ENCODE measurements at regions of chr16 and their contacts with region 1.

Region 1: DNA sequence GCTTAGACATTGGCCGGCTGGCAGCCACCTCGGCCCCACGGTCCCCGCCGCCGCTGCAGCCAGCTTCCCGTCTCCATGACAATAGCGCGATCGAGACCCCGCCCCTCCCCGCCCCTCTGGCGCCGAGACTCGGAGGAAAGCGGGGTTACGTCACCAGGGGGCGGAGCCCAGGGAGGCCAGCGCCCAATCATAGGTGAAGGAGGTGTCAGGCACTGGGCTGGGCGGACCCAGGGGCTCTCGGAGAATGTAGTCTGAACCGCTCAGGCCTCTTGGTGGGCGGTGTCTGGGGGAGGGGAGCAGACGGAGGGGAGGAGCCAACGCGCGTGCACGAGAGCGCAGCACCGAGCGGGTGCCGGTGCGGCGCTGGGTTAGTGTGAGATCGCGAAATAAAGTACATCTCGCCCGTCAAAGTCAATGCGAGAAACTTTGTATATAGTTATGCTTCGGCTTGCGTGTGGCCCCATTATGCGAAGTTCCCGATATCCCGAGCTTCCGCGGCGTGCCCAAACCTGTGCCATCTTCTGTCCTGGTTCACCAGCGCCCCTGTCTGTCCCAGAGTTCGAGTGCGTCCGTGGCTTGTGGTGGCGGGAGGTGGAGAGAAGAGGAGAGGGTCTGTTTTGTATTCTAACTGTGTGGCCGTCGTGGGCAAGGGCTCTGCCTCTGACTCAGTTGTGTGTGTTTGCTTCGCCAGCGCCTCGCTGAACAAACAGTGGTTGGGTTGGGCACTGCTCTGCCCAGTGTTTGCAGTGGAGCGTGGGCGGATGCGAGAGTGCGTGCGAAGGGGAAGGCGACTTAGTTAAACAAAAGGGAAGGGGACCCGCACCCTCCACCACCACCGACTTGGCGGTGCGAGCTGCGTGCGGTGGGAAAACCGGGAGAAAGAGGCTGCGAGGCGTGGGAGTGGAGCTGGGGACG is 1.3 kb upstream of the IRX5 start:
- DNase-seq: peak; percentile 82 to 96 (median 88)
- ATAC-seq: peak; percentile 97
- H3K4me3 ChIP-seq: peak overlapping the region; percentile 70
- H3K4me3 Mint-ChIP-seq: peak overlapping the region; percentile 84 to 96 (median 93)
- H3K27ac ChIP-seq: no peak overlapping the region
- H3K27ac Mint-ChIP-seq: peak overlapping the region in 7 of 9 donors; percentile 13 to 93 (median 59)
- H3K4me1 ChIP-seq: peaks cover 9 to 12% of the 10 kb centered on the region in 2 donors
- H3K4me1 Mint-ChIP-seq: peaks cover 16 to 36% (median 32%) of the 10 kb centered on the region in 7 donors
- H3K27me3 ChIP-seq: peaks cover 8 to 47% of the 10 kb centered on the region in 2 donors
- H3K27me3 Mint-ChIP-seq: peaks cover 63 to 73% (median 68%) of the 10 kb centered on the region in 5 donors

Region 2: DNA sequence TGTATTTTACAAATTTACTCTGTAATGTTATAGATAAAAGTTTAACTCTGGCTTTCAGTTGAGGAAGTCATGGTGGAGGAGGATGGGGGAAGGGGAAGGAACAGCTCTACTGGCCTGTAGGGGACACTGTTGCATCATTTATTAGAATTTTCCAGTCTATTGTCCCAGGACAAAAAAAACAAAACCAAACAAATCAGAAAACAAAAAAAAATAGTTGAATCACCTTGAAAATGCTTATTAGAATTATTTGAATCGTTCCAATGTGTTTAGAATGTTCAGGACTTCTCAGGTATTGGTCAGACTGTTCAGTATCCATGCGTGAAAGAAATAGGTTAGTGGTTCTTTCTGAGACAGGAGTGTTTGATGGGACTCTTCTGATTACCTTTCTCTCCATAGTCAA is 983.4 kb before region 1 on chr16:
- CTCF ChIA-PET with region 1: no interaction called
- POLR2A ChIA-PET with region 1: no interaction called
- intact Hi-C with region 1: loop called in 1 of 2 experiments (anchors 2 kb)
- DNase-seq: peak in 1 of 9 donors; percentile 17
- ATAC-seq: peak; percentile 52
- H3K4me3 ChIP-seq: no peak overlapping the region
- H3K4me3 Mint-ChIP-seq: no peak overlapping the region
- H3K27ac ChIP-seq: no peak overlapping the region
- H3K27ac Mint-ChIP-seq: peak overlapping the region in 1 of 9 donors; percentile 33
- H3K4me1 ChIP-seq: no peaks in the 10 kb centered on the region
- H3K4me1 Mint-ChIP-seq: peaks cover 8 to 33% (median 20%) of the 10 kb centered on the region in 7 donors
- H3K27me3 ChIP-seq: no peaks in the 10 kb centered on the region
- H3K27me3 Mint-ChIP-seq: no peaks in the 10 kb centered on the region

Region 3: GRCh38 chr16:54286090-54286993 is 643.0 kb before region 1 on chr16 and contains the start of gene IRX3:
- CTCF ChIA-PET with region 1: no interaction called
- POLR2A ChIA-PET with region 1: no interaction called
- intact Hi-C with region 1: loop called in 1 of 2 experiments (anchors 1 kb)
- DNase-seq: peak in 1 of 9 donors; percentile 41
- ATAC-seq: no peak
- H3K4me3 ChIP-seq: no peak within 1 kb of the TSS
- H3K4me3 Mint-ChIP-seq: peak within 1 kb of the TSS; percentile 38 to 90 (median 75)
- H3K27ac ChIP-seq: no peak within 1 kb of the TSS
- H3K27ac Mint-ChIP-seq: peak within 1 kb of the TSS in 1 of 9 donors; percentile 71
- H3K4me1 ChIP-seq: no peaks in the 10 kb centered on the region
- H3K4me1 Mint-ChIP-seq: peaks cover 19 to 53% (median 34%) of the 10 kb centered on the region in 7 donors
- H3K27me3 ChIP-seq: no peaks in the 10 kb centered on the region
- H3K27me3 Mint-ChIP-seq: peaks cover 47 to 78% (median 67%) of the 10 kb centered on the region in 5 donors
- total RNA-seq, gene IRX3: 3.2 TPM in 1 of 5 experiments, not detected in the others

Region 4: DNA sequence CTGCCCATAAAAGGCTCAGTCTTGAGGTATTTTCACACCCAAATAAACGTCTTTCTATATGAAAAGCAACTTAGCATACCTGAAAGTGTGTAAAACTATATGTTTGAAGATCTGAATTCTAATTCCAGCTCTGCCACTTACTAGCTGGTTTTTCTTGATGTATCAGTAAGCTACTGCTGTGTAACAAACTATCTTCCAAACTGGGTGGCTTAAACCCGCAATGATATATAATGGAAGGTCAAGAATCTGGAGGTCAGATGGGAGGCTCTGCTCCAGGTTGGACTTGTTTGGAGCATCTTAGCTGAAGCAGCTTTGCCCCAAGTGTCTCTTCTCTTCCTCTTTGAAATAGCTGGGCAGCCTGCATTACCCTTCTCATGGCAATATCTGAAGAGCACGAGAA is 163.0 kb before region 1 on chr16:
- CTCF ChIA-PET with region 1: no interaction called
- POLR2A ChIA-PET with region 1: no interaction called
- intact Hi-C with region 1: no loop called
- DNase-seq: no peak
- ATAC-seq: no peak
- H3K4me3 ChIP-seq: no peak overlapping the region
- H3K4me3 Mint-ChIP-seq: no peak overlapping the region
- H3K27ac ChIP-seq: no peak overlapping the region
- H3K27ac Mint-ChIP-seq: no peak overlapping the region
- H3K4me1 ChIP-seq: no peaks in the 10 kb centered on the region
- H3K4me1 Mint-ChIP-seq: no peaks in the 10 kb centered on the region
- H3K27me3 ChIP-seq: peaks cover 0 to 4% of the 10 kb centered on the region in 2 donors
- H3K27me3 Mint-ChIP-seq: peaks cover 0 to 11% (median 5%) of the 10 kb centered on the region in 5 donors

Region 5: GRCh38 chr16:54812229-54812628 is 117.1 kb before region 1 on chr16:
- CTCF ChIA-PET with region 1: no interaction called
- POLR2A ChIA-PET with region 1: no interaction called
- intact Hi-C with region 1: no loop called
- DNase-seq: no peak
- ATAC-seq: no peak
- H3K4me3 ChIP-seq: no peak overlapping the region
- H3K4me3 Mint-ChIP-seq: no peak overlapping the region
- H3K27ac ChIP-seq: no peak overlapping the region
- H3K27ac Mint-ChIP-seq: no peak overlapping the region
- H3K4me1 ChIP-seq: no peaks in the 10 kb centered on the region
- H3K4me1 Mint-ChIP-seq: no peaks in the 10 kb centered on the region
- H3K27me3 ChIP-seq: no peaks in the 10 kb centered on the region
- H3K27me3 Mint-ChIP-seq: peaks cover 0 to 21% (median 8%) of the 10 kb centered on the region in 5 donors

Region 6: DNA sequence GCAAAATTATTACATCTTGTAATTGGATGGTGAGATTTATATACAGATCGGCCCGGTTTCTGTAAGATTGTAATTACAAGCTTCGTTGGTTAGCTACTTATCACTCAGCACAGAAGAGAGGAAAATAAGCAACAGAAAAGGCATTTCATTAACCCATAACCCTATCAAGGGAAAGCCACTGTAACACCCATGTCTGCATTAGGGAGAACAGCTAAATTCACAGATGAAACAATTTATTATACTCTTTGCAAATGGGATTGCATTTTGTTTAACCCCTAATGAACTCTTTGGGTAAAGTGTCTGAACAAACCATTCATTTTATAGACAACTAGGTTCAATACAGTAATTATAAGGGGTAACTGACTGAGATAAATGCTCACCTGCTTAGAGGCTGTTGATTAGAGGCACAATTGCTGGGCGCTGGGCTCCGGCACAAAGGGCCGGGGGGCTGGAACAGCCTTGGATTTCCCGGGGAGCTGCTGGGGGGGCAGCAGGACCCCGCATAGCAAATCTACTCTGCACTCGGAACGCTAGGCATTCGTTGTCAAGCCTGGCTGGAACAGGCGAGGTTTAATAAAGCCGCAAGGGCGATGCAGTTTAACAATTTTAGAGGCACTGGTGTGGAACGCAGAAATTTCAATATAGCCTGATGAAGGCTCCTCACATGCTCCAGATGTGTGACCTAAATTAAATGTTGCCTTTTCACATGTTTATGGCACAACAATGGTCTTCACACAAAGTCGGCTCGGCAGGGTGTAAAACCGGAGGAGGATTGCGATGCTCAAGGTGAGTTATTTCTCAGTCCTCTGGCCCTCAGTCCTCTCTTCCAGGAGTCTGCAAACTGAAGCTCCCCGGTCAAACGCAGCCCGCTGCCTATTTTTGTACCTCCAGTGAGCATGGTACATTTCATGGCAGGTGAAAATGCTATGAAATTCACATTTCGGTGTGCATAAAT is 260.6 kb after region 1 on chr16:
- CTCF ChIA-PET with region 1: no interaction called
- POLR2A ChIA-PET with region 1: no interaction called
- intact Hi-C with region 1: no loop called
- DNase-seq: no peak
- ATAC-seq: no peak
- H3K4me3 ChIP-seq: no peak overlapping the region
- H3K4me3 Mint-ChIP-seq: no peak overlapping the region
- H3K27ac ChIP-seq: no peak overlapping the region
- H3K27ac Mint-ChIP-seq: no peak overlapping the region
- H3K4me1 ChIP-seq: no peaks in the 10 kb centered on the region
- H3K4me1 Mint-ChIP-seq: no peaks in the 10 kb centered on the region
- H3K27me3 ChIP-seq: peaks cover 0 to 3% of the 10 kb centered on the region in 2 donors
- H3K27me3 Mint-ChIP-seq: peaks cover 0 to 28% (median 16%) of the 10 kb centered on the region in 5 donors

Region 7: GRCh38 chr16:55324491-55325447 is 395.4 kb after region 1 on chr16:
- CTCF ChIA-PET with region 1: no interaction called
- POLR2A ChIA-PET with region 1: no interaction called
- intact Hi-C with region 1: loop called in 1 of 2 experiments (anchors 5 kb)
- DNase-seq: no peak
- ATAC-seq: no peak
- H3K4me3 ChIP-seq: no peak overlapping the region
- H3K4me3 Mint-ChIP-seq: no peak overlapping the region
- H3K27ac ChIP-seq: no peak overlapping the region
- H3K27ac Mint-ChIP-seq: no peak overlapping the region
- H3K4me1 ChIP-seq: no peaks in the 10 kb centered on the region
- H3K4me1 Mint-ChIP-seq: no peaks in the 10 kb centered on the region
- H3K27me3 ChIP-seq: no peaks in the 10 kb centered on the region
- H3K27me3 Mint-ChIP-seq: peaks cover 46 to 67% (median 60%) of the 10 kb centered on the region in 5 donors